Aorta (tissue), 5 donors: ENCODE measurements at regions of chr12 and their contacts with region 1.

Region 1: DNA sequence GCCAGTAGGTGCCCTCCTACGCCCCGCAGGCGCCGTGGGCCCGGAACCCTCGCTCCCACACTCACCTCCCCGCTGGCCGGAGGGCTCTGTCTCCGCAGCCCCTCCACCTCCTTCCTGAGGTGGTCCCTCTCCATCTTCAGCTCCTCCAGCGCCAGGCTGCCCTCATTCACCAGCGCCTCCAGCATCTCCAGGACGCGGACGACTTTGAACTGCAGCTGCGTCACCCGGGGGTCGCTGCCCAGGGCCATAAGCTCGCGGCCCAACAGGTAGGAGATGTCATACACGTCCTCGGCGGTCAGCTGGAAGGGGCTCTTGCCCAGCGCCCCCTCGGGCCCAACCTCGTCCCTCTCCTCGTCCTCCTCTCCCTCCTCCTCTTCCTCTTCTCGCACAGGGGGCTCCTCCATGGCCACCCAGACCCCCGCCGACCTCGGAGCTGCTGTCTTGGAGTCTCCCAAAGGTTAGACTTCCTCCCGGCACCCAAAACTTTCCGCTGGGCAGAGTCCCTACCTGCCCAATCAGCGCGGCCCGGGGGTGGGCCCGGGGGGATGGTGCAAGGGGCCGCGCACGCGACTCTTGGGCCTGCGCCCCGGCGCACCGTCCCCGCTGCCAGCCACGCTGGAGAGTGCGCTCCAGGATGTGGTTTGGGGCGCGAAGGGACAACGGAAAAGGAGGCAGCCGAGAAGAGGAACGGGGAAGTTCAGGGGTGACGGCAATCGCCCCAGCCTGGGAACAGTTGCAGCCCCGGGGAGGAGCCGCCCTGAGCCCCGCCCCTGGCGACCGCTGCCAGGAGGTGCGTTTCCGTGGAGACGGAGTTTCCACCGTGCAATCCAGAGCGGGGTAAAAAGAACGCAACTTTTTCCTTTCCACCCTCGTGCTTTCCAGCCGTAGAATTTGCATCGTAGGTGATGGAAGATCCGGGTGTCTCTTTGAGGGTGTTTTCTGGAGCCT is at the start of gene RILPL2:
- DNase-seq: peak; percentile 97
- ATAC-seq: peak; percentile 96
- H3K4me3 ChIP-seq: peak within 1 kb of the TSS; percentile 74 to 87
- H3K27ac ChIP-seq: peak within 1 kb of the TSS; percentile 20 to 71
- H3K4me1 ChIP-seq: peaks cover 0 to 4% of the 10 kb centered on the region in 2 donors
- H3K27me3 ChIP-seq: no peaks in the 10 kb centered on the region
- total RNA-seq, gene RILPL2: 12.6 to 13.7 TPM

Region 2: GRCh38 chr12:123337070-123337469 is 99.2 kb before region 1 on chr12:
- intact Hi-C with region 1: no loop called
- DNase-seq: no peak
- ATAC-seq: no peak
- H3K4me3 ChIP-seq: no peak overlapping the region
- H3K27ac ChIP-seq: no peak overlapping the region
- H3K4me1 ChIP-seq: no peaks in the 10 kb centered on the region
- H3K27me3 ChIP-seq: no peaks in the 10 kb centered on the region

Region 3: DNA sequence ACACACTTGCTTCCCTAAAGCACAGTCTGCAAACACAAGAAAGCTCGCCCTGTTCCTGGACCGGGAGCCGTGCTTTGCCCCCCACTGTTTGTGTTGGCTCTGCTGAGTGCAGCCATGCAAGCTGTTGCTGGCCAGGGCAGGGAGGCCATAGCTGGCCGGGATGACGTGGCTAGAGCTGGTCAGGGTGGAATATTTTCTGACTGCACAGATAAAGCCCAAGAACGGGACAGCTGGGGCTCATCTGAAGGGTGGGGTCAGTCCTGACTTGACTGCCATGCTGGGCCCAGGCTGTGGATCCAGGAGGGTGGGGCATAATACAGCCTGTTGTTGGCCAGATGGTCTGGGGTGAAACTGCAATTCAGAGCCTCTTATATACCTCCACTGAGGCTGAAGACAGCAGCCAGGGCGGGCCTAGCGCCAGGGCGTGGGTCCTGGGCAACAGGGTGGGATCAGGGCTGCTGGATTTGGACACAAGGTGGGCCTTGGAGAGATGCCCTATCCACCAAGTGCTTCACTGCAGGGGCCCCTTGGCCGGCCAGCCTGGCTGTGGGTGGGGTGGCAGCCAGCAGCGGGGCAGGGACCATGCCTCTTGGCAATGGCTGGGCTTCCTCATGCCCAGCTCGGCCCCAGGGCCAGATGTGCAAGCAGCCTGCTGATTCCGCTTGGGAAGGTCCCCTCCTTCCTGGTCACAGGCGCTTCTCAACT is 37.6 kb before region 1 on chr12:
- intact Hi-C with region 1: loop called (anchors 5 kb)
- DNase-seq: peak; percentile 90 to 91
- ATAC-seq: peak; percentile 87
- H3K4me3 ChIP-seq: no peak overlapping the region
- H3K27ac ChIP-seq: peak overlapping the region; percentile 38 to 93
- H3K4me1 ChIP-seq: no peaks in the 10 kb centered on the region
- H3K27me3 ChIP-seq: no peaks in the 10 kb centered on the region

Region 4: GRCh38 chr12:123533672-123534643 is 97.7 kb after region 1 on chr12 and contains the start of gene RILPL1:
- intact Hi-C with region 1: loop called in 1 of 2 experiments (anchors 1 kb)
- DNase-seq: peak; percentile 71 to 85
- ATAC-seq: peak; percentile 73
- H3K4me3 ChIP-seq: peak within 1 kb of the TSS; percentile 85 to 91
- H3K27ac ChIP-seq: peak within 1 kb of the TSS; percentile 89 to 90
- H3K4me1 ChIP-seq: peaks cover 4 to 5% of the 10 kb centered on the region in 2 donors
- H3K27me3 ChIP-seq: no peaks in the 10 kb centered on the region
- total RNA-seq, gene RILPL1: 28.8 to 33.3 TPM